ENCODE measurements at regions of chr2 and their contacts with region 1.

Region 1: DNA sequence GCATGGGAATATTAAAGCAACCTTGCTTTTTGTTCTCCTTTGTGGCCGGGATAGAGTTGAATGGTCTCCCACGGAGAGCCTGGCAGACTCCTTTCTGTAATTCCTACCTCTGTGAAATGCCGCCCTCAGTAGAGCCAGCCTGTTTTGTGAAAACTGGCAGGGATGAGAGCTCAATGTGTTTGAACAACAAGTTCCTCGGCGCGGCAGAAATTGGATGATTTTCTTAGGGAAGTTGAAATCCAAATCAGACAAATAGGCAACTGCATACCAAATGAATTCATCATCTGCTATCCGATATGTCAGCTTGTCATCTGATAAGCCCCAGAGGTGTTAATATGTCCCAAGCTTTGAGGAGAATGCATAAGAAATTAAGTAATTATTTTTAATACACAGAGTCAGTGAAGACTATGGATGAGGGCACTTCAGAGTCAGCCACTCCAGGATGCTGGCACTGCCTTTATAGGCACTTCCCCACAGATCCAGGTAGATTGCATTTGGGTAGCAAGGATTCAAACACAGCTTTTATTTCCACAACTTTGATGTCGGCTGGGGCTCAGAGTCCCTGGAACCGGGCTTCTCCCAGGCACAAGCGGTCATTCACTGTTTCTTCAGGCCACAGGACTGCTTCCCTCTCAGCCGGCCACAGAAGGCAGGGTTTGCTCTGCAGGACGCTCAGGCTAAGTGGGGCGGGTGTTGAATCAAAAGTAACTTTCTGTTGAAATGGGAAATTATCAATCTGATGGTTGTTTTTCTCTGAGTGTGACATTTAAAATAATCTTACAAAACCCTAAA is 82.8 kb upstream of the REV1 start:
- DNase-seq: no peak
- ATAC-seq: peak in 2 of 8 donors; percentile 14 to 56
- H3K4me3 ChIP-seq: no peak overlapping the region
- H3K27ac ChIP-seq: peak overlapping the region in 4 of 10 donors; percentile 3 to 58 (median 37)
- H3K4me1 ChIP-seq: peaks cover 0 to 19% (median 0%) of the 10 kb centered on the region in 9 donors
- H3K27me3 ChIP-seq: peaks cover 0 to 4% (median 0%) of the 10 kb centered on the region in 7 donors
- CTCF ChIP-seq: no peak

Region 2: GRCh38 chr2:99624677-99625076 is 52.1 kb after region 1 on chr2:
- intact Hi-C with region 1: loop called in 1 of 10 experiments (anchors 5 kb)
- DNase-seq: peak; percentile 35 to 62
- ATAC-seq: peak in 7 of 8 donors; percentile 38 to 88 (median 73)
- H3K4me3 ChIP-seq: no peak overlapping the region
- H3K27ac ChIP-seq: peak overlapping the region in 5 of 10 donors; percentile 5 to 61 (median 35)
- H3K4me1 ChIP-seq: peaks cover 0 to 51% (median 24%) of the 10 kb centered on the region in 9 donors
- H3K27me3 ChIP-seq: no peaks in the 10 kb centered on the region
- CTCF ChIP-seq: no peak

Region 3: GRCh38 chr2:99710721-99711120 is 138.2 kb after region 1 on chr2:
- intact Hi-C with region 1: loop called in 3 of 10 experiments (anchors 10 kb)
- DNase-seq: peak in 1 of 2 donors; percentile 17
- ATAC-seq: peak; percentile 35 to 62 (median 48)
- H3K4me3 ChIP-seq: no peak overlapping the region
- H3K27ac ChIP-seq: peak overlapping the region in 7 of 10 donors; percentile 18 to 84 (median 58)
- H3K4me1 ChIP-seq: peaks cover 5 to 60% (median 41%) of the 10 kb centered on the region in 9 donors
- H3K27me3 ChIP-seq: no peaks in the 10 kb centered on the region
- CTCF ChIP-seq: no peak

Region 4: DNA sequence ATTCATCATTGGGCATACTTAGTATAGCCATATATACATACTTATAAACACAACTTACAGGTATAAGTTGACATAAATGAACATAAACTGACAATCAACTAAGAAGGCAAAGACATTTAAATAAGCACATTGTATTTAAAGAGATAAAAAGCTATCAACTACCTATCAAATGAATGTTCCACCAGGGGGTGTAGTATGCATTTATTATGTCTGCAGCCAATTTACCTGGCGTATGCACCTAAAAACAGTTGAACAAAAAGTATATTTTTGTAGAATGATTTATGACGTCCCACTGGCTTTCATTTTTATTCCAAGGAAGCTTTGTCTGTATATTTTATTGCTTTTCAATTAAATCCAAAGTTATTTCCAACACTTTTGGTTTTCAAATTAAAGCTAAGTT is 246.3 kb after region 1 on chr2:
- intact Hi-C with region 1: loop called in 1 of 10 experiments (anchors 10 kb)
- DNase-seq: no peak
- ATAC-seq: no peak
- H3K4me3 ChIP-seq: no peak overlapping the region
- H3K27ac ChIP-seq: no peak overlapping the region
- H3K4me1 ChIP-seq: peaks cover 0 to 5% (median 0%) of the 10 kb centered on the region in 9 donors
- H3K27me3 ChIP-seq: no peaks in the 10 kb centered on the region
- CTCF ChIP-seq: peak in 7 of 9 donors; percentile 8 to 43 (median 25)

Measured in heart right ventricle (tissue), 16 donors.